ENCODE measurements at regions of chr2 and their contacts with region 1.

Region 1: DNA sequence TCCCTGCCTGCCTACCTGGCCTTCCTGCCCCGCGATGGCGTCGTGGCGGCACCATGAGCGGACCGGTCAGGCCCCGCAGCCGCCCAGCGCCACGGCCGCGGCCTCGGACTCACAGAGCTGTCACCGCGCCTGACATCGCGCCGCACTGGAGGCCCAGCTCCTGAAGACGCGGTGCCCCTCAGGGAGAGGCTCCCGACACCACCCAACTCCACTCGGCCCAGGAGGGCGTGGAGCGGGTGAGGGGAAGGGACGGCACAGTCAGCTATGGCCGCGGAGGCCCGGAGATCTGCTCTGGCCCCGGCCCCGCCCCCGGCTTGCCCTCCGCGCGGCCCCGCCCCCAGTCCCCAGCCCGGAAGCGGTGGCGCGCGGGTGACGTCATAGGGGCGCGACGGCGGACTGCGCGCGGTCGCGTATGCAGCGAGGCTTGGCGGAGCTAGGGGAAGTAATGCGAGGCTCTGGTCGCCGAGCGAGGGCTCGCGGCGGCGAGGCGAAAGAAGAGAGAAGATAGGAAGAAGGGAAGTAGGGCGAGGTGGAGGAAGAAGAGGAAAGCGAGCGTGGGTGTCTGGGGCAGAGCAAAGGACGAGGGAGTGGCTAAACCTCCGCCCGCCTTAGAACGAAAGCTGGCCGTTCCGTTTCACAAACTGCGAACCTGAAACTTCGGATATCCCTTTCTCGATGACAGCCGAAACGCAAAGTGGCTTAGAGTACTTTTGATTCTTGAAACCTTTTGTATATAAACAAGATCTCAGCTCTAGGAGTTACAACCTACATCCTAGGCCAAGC is at the start of gene SLC35F5:
- DNase-seq: peak; percentile 92

Region 2: GRCh38 chr2:113739849-113740248 is 16.7 kb before region 1 on chr2:
- CTCF ChIA-PET with region 1: no interaction called
- POLR2A ChIA-PET with region 1: interaction called, 10 read pairs
- DNase-seq: no peak

Region 3: GRCh38 chr2:113795405-113795920 is 38.9 kb after region 1 on chr2:
- CTCF ChIA-PET with region 1: interaction called, 3 read pairs
- POLR2A ChIA-PET with region 1: interaction called, 21 read pairs
- DNase-seq: no peak

Region 4: GRCh38 chr2:113818382-113818951 is 61.9 kb after region 1 on chr2:
- CTCF ChIA-PET with region 1: no interaction called
- POLR2A ChIA-PET with region 1: interaction called, 24 read pairs
- DNase-seq: peak; percentile 39

Region 5: DNA sequence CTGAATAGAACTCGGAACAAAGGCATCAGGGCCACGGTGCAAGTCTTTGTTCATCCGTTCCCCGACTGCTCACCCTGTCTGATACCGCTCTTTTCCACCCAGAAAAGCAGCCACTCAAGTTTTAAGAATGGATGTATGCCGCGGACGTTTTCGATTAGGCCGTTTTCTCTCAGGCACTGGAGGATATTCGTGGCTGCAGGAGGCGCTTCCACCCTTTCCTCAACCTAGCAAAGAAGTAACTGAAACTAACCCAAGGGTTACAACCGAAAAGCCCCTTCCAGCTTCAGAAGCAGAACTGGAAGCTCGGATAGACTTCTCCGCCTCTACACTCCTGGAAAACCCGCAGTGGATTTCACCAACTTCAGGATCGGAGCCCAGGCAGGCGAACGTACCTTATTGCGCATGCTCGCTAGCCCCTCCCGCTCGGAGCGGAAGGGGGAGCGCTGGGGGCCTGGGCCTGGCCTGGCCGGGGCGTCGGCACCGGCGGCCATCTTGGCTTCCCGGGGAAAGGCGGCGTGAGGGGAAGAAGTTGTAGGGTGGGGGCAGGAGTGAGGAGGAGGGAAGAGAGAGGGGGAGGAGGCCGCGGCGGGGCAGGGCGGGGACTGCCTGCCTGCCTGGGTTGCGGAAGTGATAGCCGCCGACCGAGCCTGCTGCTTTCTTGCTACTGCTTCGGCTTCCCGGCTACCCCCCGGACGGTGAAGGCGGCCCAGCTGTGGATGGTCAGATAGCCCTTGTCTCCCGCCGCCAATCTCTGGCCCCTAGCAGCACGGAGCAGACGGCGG is 133.1 kb after region 1 on chr2 and contains the start of gene ACTR3:
- CTCF ChIA-PET with region 1: no interaction called
- POLR2A ChIA-PET with region 1: interaction called, 29 read pairs
- DNase-seq: peak; percentile 94

Region 6: DNA sequence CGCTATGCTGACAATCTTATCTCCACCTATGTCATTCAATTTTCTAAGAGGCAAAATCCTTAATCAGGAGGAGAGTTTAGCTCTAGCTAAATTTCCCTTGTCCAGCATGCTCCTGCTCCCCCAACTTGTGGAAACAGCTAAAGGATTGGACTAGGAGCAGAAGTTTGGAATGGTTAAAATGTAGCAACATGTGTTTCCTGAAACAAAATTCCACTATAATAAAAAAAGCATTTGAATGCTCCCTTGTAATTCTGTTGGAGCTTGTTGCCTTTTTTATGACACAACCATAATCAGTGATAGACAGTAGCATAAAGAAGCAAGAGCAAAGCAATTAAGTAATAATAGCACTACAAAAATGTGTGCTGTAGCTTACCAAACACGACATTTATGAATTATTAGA is 140.2 kb after region 1 on chr2:
- CTCF ChIA-PET with region 1: no interaction called
- POLR2A ChIA-PET with region 1: interaction called, 23 read pairs
- DNase-seq: no peak

Measured in HEK293T (cell line).